ENCODE measurements at regions of chr9 and their contacts with region 1.

Region 1: DNA sequence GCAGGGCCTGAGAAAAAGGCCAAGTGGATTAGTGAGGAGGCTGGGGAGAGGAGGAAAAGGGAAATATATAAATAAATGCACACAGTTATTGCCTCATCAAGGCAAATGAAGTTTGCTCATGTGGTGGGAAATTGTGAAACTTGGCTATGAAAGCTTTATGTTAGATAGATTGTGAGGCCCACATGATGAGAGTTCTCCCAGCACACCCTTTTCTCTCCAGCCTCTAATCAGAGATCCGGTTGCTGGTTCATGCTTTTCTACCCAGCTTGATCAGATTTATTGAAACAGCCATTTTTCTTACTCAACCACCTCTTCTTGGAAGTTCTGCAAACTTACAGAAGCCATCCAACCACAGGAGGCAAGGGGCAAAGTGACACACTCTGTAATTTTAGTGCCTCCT is 125.8 kb upstream of the KLF4 start:
- DNase-seq: no peak
- ATAC-seq: peak; percentile 53
- H3K4me3 ChIP-seq: no peak overlapping the region
- H3K4me3 Mint-ChIP-seq: no peak overlapping the region
- H3K27ac ChIP-seq: no peak overlapping the region
- H3K27ac Mint-ChIP-seq: no peak overlapping the region
- H3K4me1 ChIP-seq: no peaks in the 10 kb centered on the region
- H3K4me1 Mint-ChIP-seq: peaks cover 0 to 2% (median 0%) of the 10 kb centered on the region in 7 donors
- H3K27me3 ChIP-seq: no peaks in the 10 kb centered on the region
- H3K27me3 Mint-ChIP-seq: peaks cover 0 to 17% (median 0%) of the 10 kb centered on the region in 5 donors

Region 2: DNA sequence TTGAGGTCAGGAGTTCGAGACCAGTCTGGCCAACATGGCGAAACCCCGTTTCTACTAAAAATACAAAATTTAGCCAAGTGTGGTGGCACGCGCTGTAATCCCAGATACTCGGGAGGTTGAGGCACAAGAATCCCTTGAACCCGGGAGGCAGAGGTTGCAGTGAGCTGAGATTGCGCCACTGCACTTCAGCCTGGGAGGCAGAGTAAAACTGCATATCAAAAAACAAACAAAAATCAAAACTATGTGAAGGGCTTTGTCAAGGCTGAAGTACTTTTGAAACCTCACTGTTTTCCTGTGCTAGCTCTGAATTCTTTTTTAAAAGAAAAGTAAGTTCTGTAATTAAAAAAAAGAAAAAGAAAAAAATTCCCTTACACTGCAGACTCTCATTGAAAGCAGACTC is 60.7 kb before region 1 on chr9:
- CTCF ChIA-PET with region 1: no interaction called
- POLR2A ChIA-PET with region 1: no interaction called
- intact Hi-C with region 1: loop called in 1 of 2 experiments (anchors 2 kb)
- DNase-seq: no peak
- ATAC-seq: no peak
- H3K4me3 ChIP-seq: no peak overlapping the region
- H3K4me3 Mint-ChIP-seq: no peak overlapping the region
- H3K27ac ChIP-seq: no peak overlapping the region
- H3K27ac Mint-ChIP-seq: no peak overlapping the region
- H3K4me1 ChIP-seq: no peaks in the 10 kb centered on the region
- H3K4me1 Mint-ChIP-seq: no peaks in the 10 kb centered on the region
- H3K27me3 ChIP-seq: no peaks in the 10 kb centered on the region
- H3K27me3 Mint-ChIP-seq: peaks cover 0 to 3% (median 0%) of the 10 kb centered on the region in 5 donors

Measured in naive thymus-derived CD4-positive, alpha-beta T cell (primary cell).